Head of caudate nucleus (tissue), 42 donors: ENCODE measurements at regions of chrX and their contacts with region 1.

Region 1: DNA sequence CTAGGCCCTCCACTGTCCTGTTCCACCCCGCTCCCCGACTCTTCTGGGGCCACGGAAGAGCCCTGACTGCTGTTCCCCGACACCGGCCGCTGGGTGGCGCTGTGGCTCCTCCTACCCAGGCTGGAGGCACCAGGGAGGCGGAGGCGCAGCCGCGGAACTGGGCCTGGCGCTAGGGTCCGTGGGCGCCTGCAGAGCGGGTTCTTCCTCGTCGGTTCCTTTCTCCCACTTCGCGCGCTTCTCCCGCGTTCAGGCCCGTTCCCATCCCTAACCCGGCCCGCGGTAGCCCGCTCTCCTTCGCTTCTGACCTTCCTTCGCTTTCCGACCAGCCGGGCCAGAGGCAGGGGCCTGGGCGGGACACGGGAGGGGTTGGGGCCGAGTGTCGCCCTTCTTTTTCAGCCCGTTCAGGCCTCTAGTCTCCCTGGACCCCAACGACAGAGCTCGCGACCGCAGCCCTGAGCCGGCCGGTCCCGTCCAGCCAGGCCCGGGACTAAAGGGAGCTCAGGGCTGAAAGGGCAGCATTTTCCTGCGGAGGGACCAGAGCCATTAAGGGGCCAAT is 34.3 kb downstream of the NALF2 start:
- DNase-seq: peak; percentile 28 to 89 (median 69)

Region 2: GRCh38 chrX:69615779-69616456 is 77.5 kb after region 1 on chrX and contains the start of gene EDA:
- intact Hi-C with region 1: loop called (anchors 2 kb)
- DNase-seq: peak; percentile 66 to 95 (median 88)

Region 3: DNA sequence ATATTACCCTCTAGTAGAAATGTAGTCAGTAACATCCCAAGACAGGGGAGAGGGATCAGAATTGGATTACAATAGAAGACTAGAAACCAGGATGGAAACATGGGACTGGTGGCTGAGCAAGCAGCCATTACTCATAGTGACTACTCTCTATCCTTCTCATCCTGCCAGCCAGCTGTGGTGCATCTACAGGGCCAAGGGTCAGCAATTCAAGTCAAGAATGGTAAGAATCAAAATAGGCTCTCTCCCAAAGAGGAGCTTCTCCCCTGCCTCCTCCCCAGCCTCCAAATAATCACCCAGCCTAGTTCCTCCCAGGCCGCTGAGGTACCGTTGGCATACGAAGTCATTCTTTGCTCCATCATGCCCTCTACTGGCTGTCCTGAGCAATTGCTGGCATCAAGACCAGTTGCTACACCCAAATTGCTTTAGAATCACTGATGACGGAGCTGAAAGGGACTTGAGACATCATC is 491.9 kb after region 1 on chrX:
- intact Hi-C with region 1: loop called (anchors 10 kb)
- DNase-seq: peak in 37 of 42 donors; percentile 3 to 71 (median 45)